ENCODE measurements at regions of chr1 and their contacts with region 1.

Region 1: DNA sequence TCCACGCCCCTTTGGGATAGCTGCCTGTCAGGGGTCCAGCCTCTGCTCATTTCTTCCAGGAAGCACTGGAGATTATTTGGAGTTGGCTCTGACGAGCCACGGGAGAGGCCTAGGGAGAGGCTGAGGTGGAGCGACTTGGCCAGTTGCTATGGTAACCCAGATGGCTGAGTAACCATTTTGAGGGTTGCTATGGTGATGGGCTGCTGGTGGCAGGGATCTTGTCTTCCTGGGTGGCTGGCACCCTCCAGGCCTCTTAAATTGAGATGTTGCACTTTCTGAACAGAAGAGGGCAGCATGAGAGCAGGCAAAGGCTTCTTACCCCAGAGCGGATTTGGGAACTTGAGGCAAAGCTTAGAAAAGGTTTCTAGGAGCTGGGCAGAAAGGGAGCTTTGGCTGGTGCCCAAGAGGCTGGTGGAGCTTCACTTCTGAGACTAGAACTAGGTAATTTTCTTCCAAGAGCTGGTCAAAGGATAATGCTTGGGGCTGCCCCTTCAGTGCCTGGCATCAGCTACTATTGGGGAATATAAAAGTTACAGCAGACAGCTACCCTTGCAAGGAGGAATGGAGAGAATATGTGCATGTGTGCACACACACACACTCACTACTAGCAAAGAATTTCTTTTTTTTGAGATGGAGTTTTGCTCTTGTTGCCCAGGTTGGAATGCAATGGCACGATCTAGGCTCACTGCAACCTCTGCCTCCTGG is 72.5 kb downstream of the NDUFS5 start:
- DNase-seq: peak; percentile 45 to 73
- ATAC-seq: peak; percentile 74 to 85 (median 80)
- H3K4me3 ChIP-seq: no peak overlapping the region
- H3K27ac ChIP-seq: no peak overlapping the region
- H3K4me1 ChIP-seq: peaks cover 10% of the 10 kb centered on the region
- H3K27me3 ChIP-seq: no peaks in the 10 kb centered on the region
- CTCF ChIP-seq: peak; percentile 76

Region 2: GRCh38 chr1:38818175-38818976 is 280.3 kb before region 1 on chr1:
- intact Hi-C with region 1: no loop called
- DNase-seq: peak; percentile 36 to 61
- ATAC-seq: peak; percentile 42 to 61 (median 50)
- H3K4me3 ChIP-seq: peak overlapping the region; percentile 48
- H3K27ac ChIP-seq: no peak overlapping the region
- H3K4me1 ChIP-seq: peaks cover 5% of the 10 kb centered on the region
- H3K27me3 ChIP-seq: peaks cover 0 to 77% (median 14%) of the 10 kb centered on the region in 3 donors
- CTCF ChIP-seq: peak; percentile 69

Region 3: DNA sequence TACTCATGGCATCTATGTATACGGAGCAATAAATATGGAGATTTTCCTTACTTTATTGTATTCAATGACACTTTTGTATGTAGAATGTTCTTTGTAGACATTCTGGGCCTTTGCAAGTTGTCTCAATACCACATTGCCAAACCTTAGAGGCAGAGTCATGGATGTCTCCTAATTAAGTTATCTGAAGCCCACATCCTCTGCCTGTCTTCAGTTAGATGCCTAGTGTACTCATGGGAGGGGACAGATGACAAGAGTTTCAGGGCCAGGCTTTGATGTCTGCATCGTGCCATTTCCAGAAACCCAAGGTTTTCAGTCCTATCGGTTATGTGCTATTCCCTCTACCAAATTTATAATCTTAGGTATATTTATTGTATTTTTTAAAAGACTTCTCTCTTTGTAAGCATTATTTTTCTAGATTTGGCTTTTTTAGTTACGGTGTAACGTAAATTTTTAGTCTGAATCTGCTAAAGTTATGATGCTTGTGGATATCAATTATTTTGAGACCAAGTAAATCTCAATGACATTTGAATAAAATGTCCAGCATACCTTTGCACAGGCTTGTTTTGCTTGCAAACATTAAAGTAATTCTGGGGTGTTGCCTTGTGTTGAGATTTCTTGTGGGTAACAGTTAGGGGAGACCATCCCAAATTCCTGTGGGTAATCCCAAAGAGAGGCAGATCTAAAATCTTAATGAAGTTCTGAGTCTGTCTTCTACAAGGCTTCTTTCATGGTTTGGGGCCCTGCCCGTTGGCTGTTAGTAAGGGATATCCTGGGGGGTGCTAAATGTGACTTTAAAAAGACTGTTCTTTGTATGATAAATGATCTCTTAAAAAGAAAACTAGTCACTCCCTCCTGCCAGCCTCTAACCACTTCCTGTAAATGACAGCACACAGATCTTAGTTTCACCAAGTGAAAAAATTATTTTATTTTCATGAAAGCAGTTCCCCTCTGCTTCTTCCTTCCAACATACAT is 97.8 kb after region 1 on chr1:
- intact Hi-C with region 1: loop called in 1 of 2 experiments (anchors 1 kb)
- DNase-seq: no peak
- ATAC-seq: no peak
- H3K4me3 ChIP-seq: no peak overlapping the region
- H3K27ac ChIP-seq: peak overlapping the region; percentile 14
- H3K4me1 ChIP-seq: peaks cover 35% of the 10 kb centered on the region
- H3K27me3 ChIP-seq: no peaks in the 10 kb centered on the region
- CTCF ChIP-seq: no peak

Region 4: GRCh38 chr1:39212502-39212901 is 113.8 kb after region 1 on chr1:
- intact Hi-C with region 1: no loop called
- DNase-seq: no peak
- ATAC-seq: no peak
- H3K4me3 ChIP-seq: no peak overlapping the region
- H3K27ac ChIP-seq: no peak overlapping the region
- H3K4me1 ChIP-seq: peaks cover 31% of the 10 kb centered on the region
- H3K27me3 ChIP-seq: no peaks in the 10 kb centered on the region
- CTCF ChIP-seq: no peak

Region 5: DNA sequence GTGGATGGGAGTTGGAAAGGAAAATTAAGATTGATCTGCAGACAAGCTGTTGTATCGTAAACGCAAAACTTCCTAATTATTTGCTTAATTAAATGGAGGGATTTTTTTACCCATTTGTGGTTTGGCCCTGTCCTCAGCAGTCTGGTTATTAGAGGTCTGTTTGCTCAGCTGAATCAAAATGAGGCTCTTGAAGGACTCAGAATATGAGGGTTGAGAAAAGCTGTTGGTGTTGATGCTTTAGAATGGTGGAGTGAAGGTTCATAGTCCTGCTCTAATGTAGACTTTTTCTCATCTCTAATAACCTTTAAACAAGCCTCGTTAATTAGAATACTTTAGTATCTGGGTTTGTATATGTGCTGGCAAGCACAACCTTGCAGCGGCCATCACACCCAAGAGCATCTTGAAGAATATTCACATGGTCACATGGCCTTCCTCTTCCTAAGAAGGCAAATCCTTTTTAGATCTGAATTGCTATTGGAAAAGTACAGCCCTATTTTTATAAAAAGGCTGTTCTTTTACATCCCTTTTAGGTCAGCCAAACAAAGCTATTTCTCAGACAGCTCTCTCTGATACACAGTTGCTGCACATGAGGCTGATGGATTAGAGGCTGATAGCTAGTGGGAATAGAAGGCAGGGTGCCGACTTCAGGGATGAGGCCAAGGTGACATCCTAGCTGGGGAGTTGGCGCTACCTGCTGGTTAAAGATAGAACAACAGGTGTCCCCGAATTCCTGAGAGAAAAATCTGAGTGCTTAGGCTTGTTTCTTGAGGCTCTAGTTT is 159.6 kb after region 1 on chr1:
- intact Hi-C with region 1: loop called in 1 of 2 experiments (anchors 2 kb)
- DNase-seq: peak; percentile 62 to 75
- ATAC-seq: peak; percentile 88 to 92 (median 90)
- H3K4me3 ChIP-seq: no peak overlapping the region
- H3K27ac ChIP-seq: peak overlapping the region; percentile 0
- H3K4me1 ChIP-seq: peaks cover 13% of the 10 kb centered on the region
- H3K27me3 ChIP-seq: no peaks in the 10 kb centered on the region
- CTCF ChIP-seq: peak; percentile 85

Region 6: GRCh38 chr1:39332291-39332690 is 233.6 kb after region 1 on chr1:
- intact Hi-C with region 1: loop called in 1 of 2 experiments (anchors 10 kb)
- DNase-seq: no peak
- ATAC-seq: no peak
- H3K4me3 ChIP-seq: no peak overlapping the region
- H3K27ac ChIP-seq: no peak overlapping the region
- H3K4me1 ChIP-seq: no peaks in the 10 kb centered on the region
- H3K27me3 ChIP-seq: no peaks in the 10 kb centered on the region
- CTCF ChIP-seq: no peak

Region 7: DNA sequence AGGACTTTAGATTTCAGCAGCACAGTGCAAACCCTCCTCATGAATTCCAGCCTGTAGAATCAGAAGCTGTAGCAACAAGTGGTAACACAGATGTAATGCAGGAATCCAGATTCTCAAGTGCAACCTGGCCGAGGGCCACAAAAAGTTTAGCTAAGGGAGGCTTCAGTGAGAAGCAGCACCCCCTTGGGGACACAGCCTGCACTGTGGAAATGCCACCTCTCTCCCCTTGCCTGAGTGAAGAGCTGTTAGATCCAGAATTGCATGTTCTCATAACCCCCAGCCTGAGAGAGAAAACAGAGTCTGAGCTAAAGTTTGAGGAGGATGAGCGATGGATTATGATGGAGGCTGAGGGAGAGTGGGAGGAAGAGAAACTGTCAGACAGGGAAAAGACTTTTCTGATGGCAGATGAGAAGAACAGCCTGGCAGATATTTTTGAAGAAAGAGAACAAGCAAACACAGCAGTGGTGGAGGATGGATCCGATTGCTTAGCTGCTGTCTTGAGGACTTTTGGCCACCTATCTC is 312.3 kb after region 1 on chr1:
- intact Hi-C with region 1: loop called in 1 of 2 experiments (anchors 10 kb)
- DNase-seq: peak; percentile 82 to 91
- ATAC-seq: peak; percentile 17 to 59 (median 52)
- H3K4me3 ChIP-seq: peak overlapping the region; percentile 84
- H3K27ac ChIP-seq: peak overlapping the region; percentile 87
- H3K4me1 ChIP-seq: peaks cover 69% of the 10 kb centered on the region
- H3K27me3 ChIP-seq: no peaks in the 10 kb centered on the region
- CTCF ChIP-seq: peak; percentile 59

Region 8: GRCh38 chr1:39538588-39539465 is 440.1 kb after region 1 on chr1:
- intact Hi-C with region 1: loop called (anchors 5 to 10 kb)
- DNase-seq: peak; percentile 59 to 74
- ATAC-seq: peak; percentile 79 to 86 (median 85)
- H3K4me3 ChIP-seq: no peak overlapping the region
- H3K27ac ChIP-seq: no peak overlapping the region
- H3K4me1 ChIP-seq: peaks cover 10% of the 10 kb centered on the region
- H3K27me3 ChIP-seq: no peaks in the 10 kb centered on the region
- CTCF ChIP-seq: peak; percentile 88

Measured in psoas muscle (tissue), 8 donors.